Calu3 (cell line): ENCODE measurements at regions of chr2 and their contacts with region 1.

Region 1: GRCh38 chr2:191555092-191555742 is 122.7 kb upstream of the NABP1 start:
- DNase-seq: peak; percentile 88
- H3K4me3 Mint-ChIP-seq: no peak overlapping the region
- H3K27ac Mint-ChIP-seq: no peak overlapping the region
- H3K4me1 Mint-ChIP-seq: peaks cover 8% of the 10 kb centered on the region
- H3K27me3 Mint-ChIP-seq: no peaks in the 10 kb centered on the region
- CTCF ChIP-seq: peak; percentile 58

Region 2: DNA sequence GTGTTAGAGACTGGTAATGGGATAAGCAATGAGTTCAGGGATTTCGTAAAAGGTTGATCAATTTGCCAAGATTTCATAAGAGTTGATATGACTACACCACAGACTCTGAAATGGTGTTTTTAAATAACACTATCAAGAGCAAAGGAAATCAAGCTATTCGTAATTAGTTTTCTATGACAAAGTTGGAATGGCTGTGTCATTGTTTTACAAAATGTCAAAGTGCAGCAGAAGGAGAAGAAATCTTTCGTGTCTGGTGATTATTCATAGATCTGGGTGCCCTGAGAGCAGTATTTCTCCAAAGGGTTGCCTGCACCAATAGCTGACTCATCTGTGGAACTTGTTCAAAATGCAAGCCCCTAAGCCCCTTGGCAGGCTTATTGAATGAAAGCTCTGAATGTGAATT is 192.8 kb after region 1 on chr2:
- CTCF ChIA-PET with region 1: no interaction called
- intact Hi-C with region 1: no loop called
- DNase-seq: no peak
- H3K4me3 Mint-ChIP-seq: no peak overlapping the region
- H3K27ac Mint-ChIP-seq: no peak overlapping the region
- H3K4me1 Mint-ChIP-seq: no peaks in the 10 kb centered on the region
- H3K27me3 Mint-ChIP-seq: no peaks in the 10 kb centered on the region
- CTCF ChIP-seq: no peak

Region 3: GRCh38 chr2:191869178-191869577 is 314.0 kb after region 1 on chr2:
- CTCF ChIA-PET with region 1: no interaction called
- intact Hi-C with region 1: loop called (anchors 5 kb)
- DNase-seq: peak; percentile 30
- H3K4me3 Mint-ChIP-seq: no peak overlapping the region
- H3K27ac Mint-ChIP-seq: peak overlapping the region; percentile 55
- H3K4me1 Mint-ChIP-seq: peaks cover 51% of the 10 kb centered on the region
- H3K27me3 Mint-ChIP-seq: no peaks in the 10 kb centered on the region
- CTCF ChIP-seq: peak; percentile 28